Transverse colon (tissue), 4 donors: ENCODE measurements at regions of chr10 and their contacts with region 1.

Region 1: GRCh38 chr10:88322324-88323063 is 260.6 kb downstream of the RNLS start:
- DNase-seq: no peak
- H3K4me3 ChIP-seq: no peak overlapping the region
- H3K27ac ChIP-seq: no peak overlapping the region
- H3K4me1 ChIP-seq: no peaks in the 10 kb centered on the region
- H3K27me3 ChIP-seq: no peaks in the 10 kb centered on the region
- CTCF ChIP-seq: no peak
- EP300 ChIP-seq: no peak
- POLR2A ChIP-seq: no peak

Region 2: DNA sequence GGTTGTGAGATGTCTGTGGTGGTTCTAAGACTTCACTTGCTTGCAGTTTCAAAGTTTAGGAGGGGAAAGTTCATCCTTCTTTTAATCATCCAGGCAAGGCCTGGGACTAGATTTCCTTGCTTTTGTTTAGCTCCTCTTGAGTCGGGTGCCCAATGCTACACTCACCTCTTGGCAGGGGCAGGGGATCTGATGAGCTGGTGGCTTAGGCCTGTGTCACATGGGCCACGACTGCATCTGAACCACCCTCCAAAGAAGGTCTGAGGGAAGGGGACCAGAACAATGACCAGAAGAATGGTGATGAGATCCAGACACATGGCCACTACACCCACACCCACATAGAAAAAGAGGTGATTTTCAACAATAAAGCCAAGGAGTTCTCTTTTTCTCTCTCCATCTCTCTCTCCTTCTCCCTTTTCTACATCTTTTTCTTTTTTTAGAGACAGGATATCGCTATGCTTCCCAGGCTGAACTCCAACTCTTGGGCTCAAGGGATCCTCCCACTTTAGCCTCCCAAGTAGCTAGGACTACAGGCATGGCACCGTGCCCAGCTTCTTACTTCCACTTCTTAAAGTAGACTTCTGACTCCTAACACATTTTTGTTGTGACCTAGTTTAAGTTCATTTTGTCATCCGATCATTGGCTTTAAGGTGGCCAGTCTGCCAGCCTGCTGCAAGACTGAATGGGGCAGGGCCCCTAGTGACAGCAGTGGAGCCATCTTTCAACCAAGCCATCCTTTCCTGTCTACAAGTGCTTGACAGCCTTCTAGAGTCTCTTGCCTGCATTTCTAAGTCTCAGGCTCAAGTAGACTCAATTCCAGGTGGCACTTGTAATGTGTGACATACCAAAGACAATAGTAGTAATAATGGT is 90.2 kb before region 1 on chr10:
- in situ Hi-C with region 1: no loop called
- intact Hi-C with region 1: loop called (anchors 10 kb)
- DNase-seq: peak; percentile 42
- H3K4me3 ChIP-seq: no peak overlapping the region
- H3K27ac ChIP-seq: peak overlapping the region in 3 of 4 donors; percentile 0 to 15 (median 15)
- H3K4me1 ChIP-seq: peaks cover 2 to 29% (median 12%) of the 10 kb centered on the region in 4 donors
- H3K27me3 ChIP-seq: no peaks in the 10 kb centered on the region
- CTCF ChIP-seq: no peak
- EP300 ChIP-seq: no peak
- POLR2A ChIP-seq: no peak